ENCODE measurements at regions of chr7 and their contacts with region 1.

Region 1: GRCh38 chr7:101602484-101603241 is 26.4 kb downstream of the MYL10 start:
- DNase-seq: peak; percentile 83
- CTCF ChIP-seq: peak; percentile 92

Region 2: DNA sequence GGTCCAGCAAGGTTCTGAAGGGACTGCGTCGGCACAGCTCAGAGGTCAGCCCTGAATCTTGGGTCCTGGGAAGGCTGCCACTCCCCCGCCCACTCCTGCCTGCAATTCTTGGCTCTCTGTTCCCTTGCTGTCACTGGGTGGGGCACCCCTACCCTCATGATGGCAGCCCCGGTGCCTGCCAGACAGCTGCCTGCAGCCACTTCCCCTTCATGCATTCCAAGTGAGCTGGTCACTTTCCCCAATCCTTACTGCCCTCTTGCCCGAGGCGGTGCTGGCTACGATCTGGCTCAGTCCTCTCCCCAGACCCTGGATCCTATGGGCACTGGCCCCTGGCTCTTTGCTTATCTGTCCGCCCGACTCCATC is 12.3 kb after region 1 on chr7:
- CTCF ChIA-PET with region 1: interaction called, 23 read pairs
- POLR2A ChIA-PET with region 1: no interaction called
- DNase-seq: no peak
- CTCF ChIP-seq: no peak

Region 3: DNA sequence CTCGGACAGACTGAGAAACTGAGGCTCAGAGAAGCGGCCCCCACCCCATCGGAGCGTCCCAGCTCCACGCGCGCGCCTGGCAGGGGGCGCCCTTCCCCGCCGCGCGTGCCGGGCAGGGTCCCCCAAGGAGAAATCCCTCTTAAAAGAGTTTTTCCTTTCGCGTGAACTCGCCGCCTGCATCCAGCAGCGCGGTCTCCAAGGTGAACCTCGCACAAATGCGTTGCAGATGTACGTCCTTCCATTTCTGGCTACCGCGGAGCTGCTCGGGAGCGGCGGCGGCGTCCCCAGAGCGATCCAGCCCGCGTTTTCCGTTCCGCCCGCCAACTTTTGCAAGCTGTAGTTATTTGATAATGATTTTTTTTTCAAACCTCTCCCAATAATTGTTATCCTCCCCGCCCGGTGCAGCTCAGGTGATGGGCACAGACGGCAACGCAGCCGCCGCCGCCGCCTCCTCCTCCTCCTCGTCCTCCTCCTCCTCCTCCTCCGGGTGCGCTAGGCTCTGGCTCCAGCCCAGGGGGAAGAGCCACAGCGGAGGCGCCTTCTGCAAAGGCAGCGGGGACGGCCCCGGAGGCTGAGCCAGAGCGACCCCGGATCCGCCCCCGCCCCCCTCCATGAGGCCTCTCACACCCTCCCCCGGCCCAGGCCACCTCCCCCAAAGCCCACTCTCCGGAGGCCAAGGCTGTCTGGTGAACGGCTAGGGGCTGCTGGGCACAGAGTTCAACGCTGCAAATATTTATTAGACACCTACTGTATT is 140.8 kb after region 1 on chr7:
- CTCF ChIA-PET with region 1: no interaction called
- POLR2A ChIA-PET with region 1: no interaction called
- DNase-seq: peak; percentile 73
- CTCF ChIP-seq: peak; percentile 76

Measured in GM10248 (cell line).